ENCODE measurements at regions of chr11 and their contacts with region 1.

Region 1: GRCh38 chr11:17683378-17684161 is 35.8 kb upstream of the MYOD1 start:
- DNase-seq: peak; percentile 71 to 82
- ATAC-seq: peak; percentile 69 to 73 (median 70)
- H3K4me3 ChIP-seq: no peak overlapping the region
- H3K27ac ChIP-seq: peak overlapping the region; percentile 88
- H3K4me1 ChIP-seq: peaks cover 52% of the 10 kb centered on the region
- H3K27me3 ChIP-seq: no peaks in the 10 kb centered on the region
- CTCF ChIP-seq: no peak

Region 2: DNA sequence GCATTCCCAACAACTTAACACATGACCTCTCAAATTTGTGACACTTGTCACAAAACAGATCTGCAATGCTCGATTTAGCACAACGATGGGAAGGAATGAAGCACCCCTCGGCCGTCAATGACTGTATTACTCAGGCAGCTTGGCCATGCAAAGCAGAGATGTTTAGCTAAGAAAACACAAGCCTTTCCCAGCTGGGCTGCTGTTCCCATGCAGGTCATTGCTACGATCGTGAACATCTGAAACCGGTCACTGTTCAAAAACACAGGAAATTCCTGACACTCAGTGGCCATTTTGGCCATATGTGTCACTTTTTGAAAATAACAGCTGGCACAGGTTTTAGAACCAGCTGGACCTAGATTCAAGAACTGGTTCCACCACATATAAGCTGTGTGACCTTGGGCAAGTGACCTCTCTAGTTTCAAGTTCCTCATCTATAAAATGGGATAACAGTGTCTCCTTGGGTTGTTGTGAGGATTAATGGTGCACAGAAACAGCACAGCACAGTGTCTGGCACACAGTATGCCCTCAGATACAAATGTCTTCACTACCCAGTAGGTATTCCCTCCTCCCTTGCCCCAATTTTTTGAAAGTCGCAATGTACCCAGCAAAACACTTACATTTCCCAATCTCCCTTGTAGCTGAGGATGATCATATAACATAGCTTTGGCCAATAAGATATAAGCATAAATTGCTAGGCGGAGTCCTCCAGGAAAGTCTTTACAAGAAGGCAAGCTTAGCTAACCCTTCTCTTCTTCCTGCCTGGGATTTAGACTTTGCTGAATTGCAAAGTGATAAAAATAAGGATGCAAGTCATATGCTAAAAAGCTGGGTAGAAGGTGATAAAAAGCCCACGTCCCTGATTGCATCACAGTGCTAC is 852.0 kb before region 1 on chr11:
- intact Hi-C with region 1: no loop called
- DNase-seq: no peak
- ATAC-seq: no peak
- H3K4me3 ChIP-seq: no peak overlapping the region
- H3K27ac ChIP-seq: no peak overlapping the region
- H3K4me1 ChIP-seq: no peaks in the 10 kb centered on the region
- H3K27me3 ChIP-seq: no peaks in the 10 kb centered on the region
- CTCF ChIP-seq: no peak

Region 3: DNA sequence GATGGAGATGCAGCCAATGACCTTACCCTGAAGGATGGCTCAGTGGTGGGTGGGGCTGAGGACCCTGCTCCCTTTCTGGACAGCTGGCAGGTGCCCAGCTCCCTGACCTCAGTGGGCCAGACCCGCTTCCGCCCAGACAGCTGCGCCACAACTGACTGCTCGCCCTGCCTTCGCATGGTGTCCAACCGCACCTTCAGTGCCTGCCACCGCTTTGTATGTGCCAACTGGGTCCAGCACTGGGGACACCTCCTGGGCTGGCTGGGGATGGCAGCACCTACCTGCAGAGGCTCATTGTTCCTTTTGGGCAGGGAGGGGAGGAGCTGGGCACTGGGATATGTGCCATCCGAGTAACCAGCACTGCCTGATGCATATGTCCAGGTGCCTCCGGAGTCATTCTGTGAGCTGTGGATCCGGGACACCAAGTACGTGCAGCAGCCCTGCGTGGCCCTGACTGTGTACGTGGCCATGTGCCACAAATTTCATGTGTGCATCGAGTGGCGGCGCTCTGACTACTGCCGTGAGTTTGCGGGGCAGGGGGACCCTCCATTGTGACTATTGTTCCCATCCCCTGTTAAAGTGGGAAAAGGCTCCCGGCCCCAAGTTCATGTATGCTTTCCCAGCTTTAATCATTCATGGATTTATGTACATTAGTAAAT is 51.7 kb before region 1 on chr11:
- intact Hi-C with region 1: loop called in 1 of 2 experiments (anchors 5 kb)
- DNase-seq: no peak
- ATAC-seq: peak in 2 of 4 donors; percentile 26 to 28
- H3K4me3 ChIP-seq: no peak overlapping the region
- H3K27ac ChIP-seq: no peak overlapping the region
- H3K4me1 ChIP-seq: peaks cover 9% of the 10 kb centered on the region
- H3K27me3 ChIP-seq: no peaks in the 10 kb centered on the region
- CTCF ChIP-seq: no peak

Region 4: DNA sequence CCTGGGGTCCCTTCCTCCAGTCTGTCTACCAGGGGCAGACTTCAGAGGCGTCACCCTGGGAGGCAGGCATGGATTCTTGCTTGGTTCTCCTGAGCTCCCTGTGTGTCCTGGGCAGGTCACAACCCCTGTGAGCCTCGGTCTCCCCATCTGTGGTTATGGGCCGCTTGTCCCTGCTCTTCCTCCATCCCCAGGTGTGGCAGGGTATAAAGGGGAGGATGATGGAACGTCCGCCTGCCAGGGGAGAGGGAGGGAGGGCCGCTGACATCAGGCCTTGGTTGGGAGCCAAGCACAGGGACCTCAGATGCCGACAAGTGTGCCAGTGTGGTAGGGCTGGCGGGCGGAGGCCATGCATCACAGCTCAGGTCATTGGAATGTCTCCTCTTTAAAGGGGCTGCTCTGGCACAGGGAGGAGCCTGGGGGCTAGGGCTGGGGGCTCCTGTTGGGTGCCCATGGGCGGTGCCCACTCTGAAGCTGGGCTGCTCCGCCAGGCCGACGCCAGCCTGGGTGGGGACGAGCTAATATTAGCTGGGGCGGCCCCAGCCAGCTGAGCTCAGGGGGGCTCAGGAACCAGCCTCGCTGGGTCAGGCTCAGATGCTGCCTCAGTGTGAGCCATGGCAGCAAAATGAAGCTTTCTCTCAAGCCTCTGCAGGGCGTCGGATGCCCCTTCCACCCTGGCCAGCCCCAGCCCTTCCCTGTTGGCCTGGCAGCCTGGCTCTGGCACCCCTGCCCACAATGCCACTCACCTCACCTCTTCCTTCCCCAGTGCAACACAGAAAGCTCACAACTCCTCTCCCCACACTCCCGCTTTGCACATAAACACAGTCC is 63.8 kb after region 1 on chr11:
- intact Hi-C with region 1: no loop called
- DNase-seq: peak in 1 of 2 donors; percentile 24
- ATAC-seq: no peak
- H3K4me3 ChIP-seq: no peak overlapping the region
- H3K27ac ChIP-seq: no peak overlapping the region
- H3K4me1 ChIP-seq: peaks cover 30% of the 10 kb centered on the region
- H3K27me3 ChIP-seq: no peaks in the 10 kb centered on the region
- CTCF ChIP-seq: no peak